ENCODE measurements at regions of chr15 and their contacts with region 1.

Region 1: DNA sequence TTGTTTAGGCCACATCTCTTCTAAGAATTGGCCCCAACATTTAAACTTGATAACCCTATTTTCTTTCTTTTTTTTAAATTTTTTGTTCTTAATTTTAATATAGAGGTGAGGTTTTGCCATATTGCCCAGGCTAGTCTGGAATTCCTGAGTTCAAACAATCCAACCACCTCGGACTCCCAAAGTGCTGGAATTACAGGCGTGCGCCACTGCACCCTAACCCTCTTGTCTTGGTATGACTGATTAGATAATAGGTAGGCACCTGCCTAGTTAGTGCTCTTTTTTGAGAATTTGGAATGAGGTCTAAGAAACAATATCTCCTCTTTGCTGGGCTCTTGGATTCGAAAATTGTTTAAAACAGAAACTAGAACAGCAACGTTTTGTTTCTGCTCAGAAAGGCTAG is 116.4 kb upstream of the GOLGA6L6 start:
- DNase-seq: no peak
- H3K4me3 Mint-ChIP-seq: no peak overlapping the region
- H3K27ac Mint-ChIP-seq: no peak overlapping the region
- H3K4me1 Mint-ChIP-seq: no peaks in the 10 kb centered on the region
- H3K27me3 Mint-ChIP-seq: no peaks in the 10 kb centered on the region
- CTCF ChIP-seq: no peak

Region 2: GRCh38 chr15:20280933-20281463 is 377.0 kb before region 1 on chr15:
- CTCF ChIA-PET with region 1: no interaction called
- POLR2A ChIA-PET with region 1: no interaction called
- intact Hi-C with region 1: no loop called
- DNase-seq: no peak
- H3K4me3 Mint-ChIP-seq: no peak overlapping the region
- H3K27ac Mint-ChIP-seq: no peak overlapping the region
- H3K4me1 Mint-ChIP-seq: no peaks in the 10 kb centered on the region
- H3K27me3 Mint-ChIP-seq: no peaks in the 10 kb centered on the region
- CTCF ChIP-seq: no peak

Region 3: GRCh38 chr15:20645956-20646355 is 12.1 kb before region 1 on chr15:
- CTCF ChIA-PET with region 1: interaction called, 3 read pairs
- POLR2A ChIA-PET with region 1: interaction called, 4 read pairs
- intact Hi-C with region 1: loop called (anchors 1 kb)
- DNase-seq: peak; percentile 61
- H3K4me3 Mint-ChIP-seq: no peak overlapping the region
- H3K27ac Mint-ChIP-seq: no peak overlapping the region
- H3K4me1 Mint-ChIP-seq: no peaks in the 10 kb centered on the region
- H3K27me3 Mint-ChIP-seq: no peaks in the 10 kb centered on the region
- CTCF ChIP-seq: no peak

Measured in MCF 10A (cell line).